Activated B cell treated with CpG ODN at 0.5 μM for 24 hours (primary cell): ENCODE measurements at regions of chr2 and their contacts with region 1.

Region 1: DNA sequence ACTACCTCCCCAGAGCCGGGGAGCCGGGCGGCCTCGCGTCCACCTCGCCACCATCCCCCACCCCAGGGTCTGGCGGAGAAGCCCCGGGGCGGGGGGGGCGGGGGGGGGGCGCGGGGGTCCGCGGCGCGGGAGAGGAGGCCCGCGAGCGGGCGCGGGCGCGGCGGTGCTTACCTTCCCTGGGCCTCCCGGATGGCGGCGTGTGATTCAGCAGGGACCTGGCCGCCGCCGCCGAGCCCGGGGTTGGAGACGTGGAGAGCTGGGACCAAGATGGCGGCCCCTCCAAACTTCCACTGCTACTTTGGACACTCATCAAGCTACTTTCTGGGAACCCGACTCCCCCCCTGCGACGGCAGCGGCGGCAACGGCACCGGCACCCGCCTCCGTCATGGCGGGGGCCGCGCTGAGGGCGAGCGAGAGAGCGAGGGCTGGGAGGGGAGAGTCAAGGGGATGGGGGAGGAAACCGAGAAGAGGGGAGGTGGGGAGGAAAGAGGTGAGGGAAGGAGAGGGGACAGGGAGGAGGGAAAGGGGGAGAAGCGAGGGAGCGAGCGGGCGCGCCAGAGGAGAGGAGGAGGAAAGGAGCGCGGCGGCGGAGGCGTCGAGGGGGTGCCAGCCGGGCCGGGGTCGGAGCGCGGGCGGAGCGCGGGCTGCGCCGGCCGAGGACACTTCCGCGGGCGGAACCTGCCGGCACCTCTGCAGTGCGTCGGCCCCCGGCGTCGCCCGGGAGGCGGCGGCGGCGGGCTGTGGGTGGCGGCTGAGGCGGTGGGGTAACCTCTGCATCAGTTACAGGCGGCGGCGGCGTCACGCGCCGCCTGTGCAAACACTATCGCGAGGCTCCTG is at the start of gene TLK1:
- DNase-seq: peak; percentile 74
- ATAC-seq: peak; percentile 73
- H3K4me3 Mint-ChIP-seq: peak within 1 kb of the TSS; percentile 92
- H3K27ac Mint-ChIP-seq: peak within 1 kb of the TSS; percentile 98
- H3K4me1 Mint-ChIP-seq: peaks cover 60% of the 10 kb centered on the region
- H3K27me3 Mint-ChIP-seq: no peaks in the 10 kb centered on the region
- CTCF ChIP-seq: no peak
- total RNA-seq, gene TLK1: 123 and 125 TPM in 2 replicates

Region 2: DNA sequence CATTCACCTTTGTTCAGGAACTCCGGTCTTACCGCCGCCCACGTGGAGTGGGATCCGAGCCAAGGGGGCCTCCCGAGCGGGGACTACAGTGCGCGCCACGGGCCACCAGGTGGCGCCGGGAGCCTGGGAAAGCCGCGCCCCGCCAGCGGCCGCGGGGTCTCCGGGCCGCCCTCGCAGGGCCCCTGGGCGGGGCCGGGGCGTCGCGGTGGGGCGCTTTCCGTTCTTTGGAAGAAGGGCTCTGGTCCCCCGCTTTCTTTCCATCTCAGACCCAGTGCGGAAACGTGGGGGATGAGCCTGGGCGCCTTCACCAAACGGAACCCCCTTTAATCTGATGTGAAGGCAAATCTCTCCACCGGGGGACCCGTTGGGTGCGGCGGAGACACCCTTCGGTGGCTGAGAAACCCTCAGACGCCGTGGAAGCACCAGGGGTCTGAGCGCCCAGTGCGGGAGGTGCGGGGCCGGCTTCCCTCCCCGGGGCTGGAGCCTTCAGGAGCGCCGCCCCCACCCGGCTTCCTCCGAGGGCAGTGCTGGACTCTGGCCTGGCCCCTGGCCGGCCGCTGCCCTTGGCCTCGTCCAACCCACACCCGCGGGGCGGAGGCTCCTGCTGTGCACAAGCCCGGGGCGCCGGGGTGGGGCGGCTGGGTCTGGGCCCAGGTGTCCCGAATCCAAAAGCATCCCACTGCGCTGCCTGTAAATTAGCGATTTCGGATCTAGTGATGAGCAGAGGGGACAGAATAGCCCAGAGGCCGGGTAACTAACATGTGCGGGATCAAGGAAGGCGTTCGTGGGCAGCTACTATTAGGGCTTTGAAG is 186.6 kb before region 1 on chr2:
- CTCF ChIA-PET with region 1: interaction called, 13 read pairs
- POLR2A ChIA-PET with region 1: interaction called, 6 read pairs
- intact Hi-C with region 1: loop called (anchors 1 kb)
- DNase-seq: peak; percentile 90
- ATAC-seq: peak; percentile 96
- H3K4me3 Mint-ChIP-seq: peak overlapping the region; percentile 87
- H3K27ac Mint-ChIP-seq: peak overlapping the region; percentile 81
- H3K4me1 Mint-ChIP-seq: peaks cover 15% of the 10 kb centered on the region
- H3K27me3 Mint-ChIP-seq: no peaks in the 10 kb centered on the region
- CTCF ChIP-seq: peak; percentile 80

Region 3: DNA sequence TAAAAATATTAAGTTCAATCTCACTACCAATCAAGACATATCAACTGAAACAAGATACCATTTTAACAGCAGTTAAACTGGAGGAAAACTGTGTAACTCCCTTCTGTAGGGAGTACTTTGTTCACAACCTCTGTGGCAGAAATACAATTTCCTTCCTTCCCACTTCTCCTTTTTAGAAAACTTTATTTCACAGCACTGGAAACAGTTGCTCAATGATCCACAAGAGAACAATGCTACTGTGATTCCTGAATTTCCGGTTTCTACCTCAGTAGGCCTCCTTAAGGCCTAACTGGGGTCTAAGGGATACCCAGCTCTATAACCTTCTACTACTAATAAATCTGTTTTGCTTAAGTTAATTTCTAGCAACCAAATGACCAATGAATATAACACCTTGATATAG is 13.7 kb before region 1 on chr2:
- CTCF ChIA-PET with region 1: no interaction called
- POLR2A ChIA-PET with region 1: no interaction called
- intact Hi-C with region 1: loop called (anchors 1 kb)
- DNase-seq: no peak
- ATAC-seq: peak; percentile 47
- H3K4me3 Mint-ChIP-seq: peak overlapping the region; percentile 36
- H3K27ac Mint-ChIP-seq: peak overlapping the region; percentile 80
- H3K4me1 Mint-ChIP-seq: peaks cover 80% of the 10 kb centered on the region
- H3K27me3 Mint-ChIP-seq: no peaks in the 10 kb centered on the region
- CTCF ChIP-seq: no peak

Region 4: DNA sequence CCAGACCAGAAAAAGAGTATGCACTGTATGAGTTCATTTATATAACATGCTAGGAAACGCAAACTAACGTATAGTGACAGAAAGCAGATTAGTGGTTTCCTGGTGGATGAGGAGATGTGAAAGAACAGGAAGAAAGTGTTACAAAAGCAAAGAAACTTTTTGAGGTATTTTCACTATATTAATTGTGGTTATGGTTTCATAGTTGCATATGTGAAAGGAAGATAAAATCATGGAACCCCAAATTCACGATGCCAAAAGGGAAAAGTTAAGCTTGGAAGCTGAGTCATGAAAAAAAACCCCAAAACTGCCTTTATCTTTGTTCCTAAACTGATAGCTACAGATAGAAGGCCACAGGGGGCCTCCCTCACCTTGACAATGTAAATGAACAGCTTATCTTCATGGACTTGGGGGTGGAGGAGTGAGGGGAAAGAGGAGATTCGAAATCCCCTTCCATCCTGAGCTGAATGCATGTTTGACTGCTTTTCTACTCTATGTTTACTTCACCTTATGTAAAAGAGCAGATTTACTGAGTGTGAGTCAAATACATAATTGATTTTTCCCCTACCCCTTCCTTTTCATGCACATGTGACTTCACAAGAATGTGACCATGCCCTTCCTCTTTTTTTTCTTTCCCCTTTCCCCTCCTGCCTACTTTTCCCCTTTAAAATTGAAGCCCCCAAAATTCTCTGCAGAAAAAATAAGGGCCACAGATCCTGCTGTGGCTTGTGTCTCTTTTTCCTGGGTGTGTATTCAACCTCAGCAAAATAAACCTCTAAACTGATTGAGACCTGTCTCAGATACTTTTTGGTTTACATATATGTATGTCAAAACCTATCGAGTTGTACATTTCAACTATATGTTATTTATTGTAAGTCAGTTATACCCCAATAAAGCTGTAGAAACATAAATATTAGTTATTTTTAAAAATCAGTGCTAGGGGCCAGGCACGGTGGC is 100.4 kb after region 1 on chr2:
- CTCF ChIA-PET with region 1: no interaction called
- POLR2A ChIA-PET with region 1: interaction called, 10 read pairs
- intact Hi-C with region 1: no loop called
- DNase-seq: no peak
- ATAC-seq: peak; percentile 52
- H3K4me3 Mint-ChIP-seq: peak overlapping the region; percentile 5
- H3K27ac Mint-ChIP-seq: peak overlapping the region; percentile 82
- H3K4me1 Mint-ChIP-seq: peaks cover 25% of the 10 kb centered on the region
- H3K27me3 Mint-ChIP-seq: no peaks in the 10 kb centered on the region
- CTCF ChIP-seq: no peak

Region 5: GRCh38 chr2:171334171-171334570 is 173.8 kb after region 1 on chr2:
- CTCF ChIA-PET with region 1: no interaction called
- POLR2A ChIA-PET with region 1: interaction called, 35 read pairs
- intact Hi-C with region 1: loop called (anchors 1 kb)
- DNase-seq: no peak
- ATAC-seq: no peak
- H3K4me3 Mint-ChIP-seq: no peak overlapping the region
- H3K27ac Mint-ChIP-seq: no peak overlapping the region
- H3K4me1 Mint-ChIP-seq: peaks cover 56% of the 10 kb centered on the region
- H3K27me3 Mint-ChIP-seq: no peaks in the 10 kb centered on the region
- CTCF ChIP-seq: no peak

Region 6: GRCh38 chr2:171433763-171434670 is 273.7 kb after region 1 on chr2 and contains the starts of genes DCAF17 and METTL8:
- CTCF ChIA-PET with region 1: interaction called, 3 read pairs
- POLR2A ChIA-PET with region 1: interaction called, 10 read pairs
- intact Hi-C with region 1: loop called (anchors 1 kb)
- DNase-seq: peak; percentile 91
- ATAC-seq: peak; percentile 92
- H3K4me3 Mint-ChIP-seq: peak within 1 kb of the TSS; percentile 90
- H3K27ac Mint-ChIP-seq: peak within 1 kb of the TSS; percentile 94
- H3K4me1 Mint-ChIP-seq: peaks cover 24% of the 10 kb centered on the region
- H3K27me3 Mint-ChIP-seq: no peaks in the 10 kb centered on the region
- CTCF ChIP-seq: no peak
- total RNA-seq, gene DCAF17: 23.1 and 23.5 TPM in 2 replicates
- total RNA-seq, gene METTL8: 16.5 and 22.9 TPM in 2 replicates

Region 7: DNA sequence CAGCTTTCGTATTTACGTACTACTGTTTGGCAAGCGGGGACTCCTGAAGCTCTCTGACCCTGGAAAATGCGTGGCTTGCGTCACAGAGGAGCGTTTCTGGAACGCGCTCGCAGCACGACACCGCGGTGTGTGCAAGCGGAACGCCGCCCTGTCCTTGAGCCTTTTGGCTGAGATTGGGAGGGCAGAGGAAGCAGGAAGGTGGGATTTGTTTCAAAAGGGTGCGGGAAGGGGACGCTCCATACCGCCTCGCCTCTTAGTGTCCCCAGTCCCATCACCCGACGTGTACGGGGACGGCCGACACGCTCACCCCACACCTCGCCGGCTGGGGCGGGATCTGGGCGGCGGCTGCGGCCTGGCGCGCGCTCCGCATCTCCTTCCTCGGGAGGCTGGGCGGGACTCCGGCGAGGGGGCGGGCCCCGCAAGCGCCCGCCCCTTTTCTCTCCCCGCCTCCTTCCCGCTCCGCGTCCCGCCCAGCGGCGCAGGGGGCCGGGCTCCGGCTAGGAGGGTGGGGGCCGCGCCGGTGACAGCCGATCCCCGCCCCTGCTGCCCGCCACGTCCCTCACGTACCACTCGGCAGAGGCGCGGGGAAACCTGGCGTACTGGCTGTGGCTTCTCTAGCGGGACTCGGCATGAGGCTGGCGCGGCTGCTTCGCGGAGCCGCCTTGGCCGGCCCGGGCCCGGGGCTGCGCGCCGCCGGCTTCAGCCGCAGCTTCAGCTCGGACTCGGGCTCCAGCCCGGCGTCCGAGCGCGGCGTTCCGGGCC is 1395.4 kb after region 1 on chr2 and contains the start of gene PDK1:
- CTCF ChIA-PET with region 1: no interaction called
- POLR2A ChIA-PET with region 1: no interaction called
- intact Hi-C with region 1: loop called (anchors 5 kb)
- DNase-seq: peak; percentile 95
- ATAC-seq: peak; percentile 92
- H3K4me3 Mint-ChIP-seq: peak within 1 kb of the TSS; percentile 95
- H3K27ac Mint-ChIP-seq: peak within 1 kb of the TSS; percentile 93
- H3K4me1 Mint-ChIP-seq: peaks cover 35% of the 10 kb centered on the region
- H3K27me3 Mint-ChIP-seq: no peaks in the 10 kb centered on the region
- CTCF ChIP-seq: no peak
- total RNA-seq, gene PDK1: 14.8 and 16.3 TPM in 2 replicates